HEK293 (cell line): ENCODE measurements at regions of chr6 and their contacts with region 1.

Region 1: GRCh38 chr6:36340618-36341454 is 4.1 kb upstream of the BNIP5 start:
- H3K4me3 ChIP-seq: no peak overlapping the region
- H3K27ac ChIP-seq: no peak overlapping the region
- H3K4me1 ChIP-seq: no peaks in the 10 kb centered on the region
- CTCF ChIP-seq: peak; percentile 77

Region 2: DNA sequence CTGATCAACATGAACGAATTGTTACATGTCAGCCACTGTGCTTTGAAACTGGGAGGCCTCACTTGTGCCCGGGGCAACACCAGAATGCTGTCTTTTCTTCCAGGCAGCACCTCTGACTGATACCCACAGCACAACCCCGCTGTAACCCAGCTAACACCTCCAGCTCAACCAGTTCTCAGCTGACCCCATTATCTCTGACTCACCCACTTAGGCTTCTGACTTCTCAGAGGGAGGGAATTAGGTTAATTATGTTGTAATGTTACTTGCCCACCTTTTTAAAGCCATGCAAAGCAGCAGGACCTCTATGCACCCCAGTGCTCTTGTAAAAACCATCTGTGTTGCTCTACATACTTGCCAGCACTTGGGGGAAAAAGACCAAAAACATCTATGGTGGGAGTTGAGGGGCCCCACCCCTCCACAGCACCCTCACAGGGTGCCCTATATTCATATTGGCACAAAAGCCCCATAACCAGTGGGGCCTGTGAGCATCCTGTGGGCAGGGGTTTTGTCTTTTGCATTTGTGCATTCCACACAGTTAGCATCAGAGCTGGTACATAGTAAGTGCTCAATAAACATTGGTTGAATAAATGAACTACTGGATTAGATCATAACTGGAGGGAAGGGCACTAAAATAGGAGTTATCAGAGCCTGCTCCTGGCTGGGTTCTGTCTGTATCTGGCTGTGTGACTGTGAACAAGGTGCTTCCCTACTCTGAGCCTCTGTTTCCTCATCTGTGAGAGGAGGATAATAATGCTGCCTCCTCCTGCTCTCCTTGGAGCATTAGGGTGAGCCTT is 26.4 kb before region 1 on chr6:
- CTCF ChIA-PET with region 1: interaction called, 57 read pairs
- POLR2A ChIA-PET with region 1: no interaction called
- H3K4me3 ChIP-seq: no peak overlapping the region
- H3K27ac ChIP-seq: no peak overlapping the region
- H3K4me1 ChIP-seq: peaks cover 13% of the 10 kb centered on the region
- CTCF ChIP-seq: no peak

Region 3: GRCh38 chr6:36326356-36326995 is 14.4 kb before region 1 on chr6:
- CTCF ChIA-PET with region 1: interaction called, 40 read pairs
- POLR2A ChIA-PET with region 1: no interaction called
- H3K4me3 ChIP-seq: no peak overlapping the region
- H3K27ac ChIP-seq: no peak overlapping the region
- H3K4me1 ChIP-seq: no peaks in the 10 kb centered on the region
- CTCF ChIP-seq: no peak

Region 4: GRCh38 chr6:36350681-36351571 is 10.1 kb after region 1 on chr6:
- CTCF ChIA-PET with region 1: interaction called, 234 read pairs
- POLR2A ChIA-PET with region 1: interaction called, 5 read pairs
- H3K4me3 ChIP-seq: no peak overlapping the region
- H3K27ac ChIP-seq: 0 out of 2 replicates have a peak overlapping the region, but pooled peaks have one; percentile 6
- H3K4me1 ChIP-seq: peaks cover 3% of the 10 kb centered on the region; the same call in 1 of the 2 replicates
- CTCF ChIP-seq: no peak

Region 5: DNA sequence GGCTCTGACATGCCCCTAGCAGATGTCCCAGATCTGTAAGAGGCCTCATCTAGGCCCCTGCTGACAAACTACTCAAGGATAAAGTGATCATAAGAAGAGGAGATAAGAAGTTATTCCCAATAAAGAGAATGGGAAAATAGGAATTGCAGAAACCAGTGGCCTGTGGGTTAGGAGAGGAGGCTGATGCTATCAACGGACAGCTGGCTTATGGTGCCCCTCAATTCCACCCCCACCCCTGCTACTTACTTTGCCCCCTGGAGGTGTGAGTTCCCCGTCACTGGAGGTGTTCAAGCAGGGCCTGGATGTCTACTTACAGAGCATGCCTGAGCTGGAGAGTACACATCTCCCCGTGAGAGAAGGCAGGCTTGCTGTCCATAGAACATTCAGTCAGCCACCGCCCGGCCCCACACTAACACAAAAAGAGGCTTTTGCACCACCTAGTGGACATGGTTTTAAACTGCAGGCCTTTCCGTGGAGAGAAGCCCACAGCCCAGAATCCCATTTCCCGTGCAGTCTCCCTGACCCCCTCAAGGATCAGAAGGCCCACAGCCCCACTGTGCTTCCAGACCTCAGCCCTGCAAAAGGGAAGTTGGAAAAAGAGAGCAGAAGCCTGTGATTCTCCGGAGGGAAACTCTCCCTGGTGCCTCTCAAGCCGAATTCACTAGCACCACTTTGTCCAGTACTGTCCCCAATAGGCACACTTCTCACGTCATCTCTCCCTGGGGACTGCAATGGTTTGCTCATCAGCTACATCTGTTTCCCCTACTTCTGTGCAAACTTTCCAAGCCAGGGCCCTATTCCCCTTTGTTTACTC is 19.6 kb after region 1 on chr6:
- CTCF ChIA-PET with region 1: interaction called, 234 read pairs
- POLR2A ChIA-PET with region 1: no interaction called
- H3K4me3 ChIP-seq: no peak overlapping the region
- H3K27ac ChIP-seq: no peak overlapping the region
- H3K4me1 ChIP-seq: no peaks in the 10 kb centered on the region
- CTCF ChIP-seq: peak; percentile 79

Region 6: DNA sequence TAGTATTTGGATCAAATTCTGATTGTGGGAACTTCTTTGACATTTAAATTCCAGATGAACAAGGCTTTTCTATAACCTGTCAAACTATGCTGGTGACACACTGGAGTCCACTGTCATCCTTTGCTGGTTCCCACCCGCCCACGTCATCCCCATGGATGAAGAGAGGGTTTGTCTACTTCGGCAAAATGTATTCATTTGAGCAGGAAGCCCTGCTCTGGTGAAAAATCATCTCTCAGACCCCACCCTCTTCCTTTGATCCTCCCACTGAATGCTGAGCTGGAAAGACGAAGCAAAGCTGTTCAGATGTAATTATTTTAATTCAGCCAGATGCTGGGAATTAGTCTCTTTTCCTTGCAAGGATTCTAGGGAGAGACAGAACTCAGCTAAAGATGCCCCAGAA is 447.9 kb after region 1 on chr6:
- CTCF ChIA-PET with region 1: no interaction called
- POLR2A ChIA-PET with region 1: no interaction called
- H3K4me3 ChIP-seq: no peak overlapping the region
- H3K27ac ChIP-seq: no peak overlapping the region
- H3K4me1 ChIP-seq: no peaks in the 10 kb centered on the region
- CTCF ChIP-seq: no peak